ENCODE measurements at regions of chr14 and their contacts with region 1.

Region 1: GRCh38 chr14:45526715-45527549 is 273.9 kb upstream of the MIS18BP1 start:
- DNase-seq: no peak
- H3K4me3 ChIP-seq: no peak overlapping the region
- H3K27ac ChIP-seq: no peak overlapping the region
- H3K27me3 ChIP-seq: no peaks in the 10 kb centered on the region
- CTCF ChIP-seq: peak in 34 of 56 donors; percentile 10 to 46 (median 28)

Region 2: GRCh38 chr14:45426670-45427282 is 100.2 kb before region 1 on chr14:
- intact Hi-C with region 1: loop called in 1 of 2 experiments (anchors 5 kb)
- DNase-seq: no peak
- H3K4me3 ChIP-seq: no peak overlapping the region
- H3K27ac ChIP-seq: no peak overlapping the region
- H3K27me3 ChIP-seq: no peaks in the 10 kb centered on the region
- CTCF ChIP-seq: peak; percentile 29 to 82 (median 68)

Region 3: GRCh38 chr14:45940307-45940706 is 413.4 kb after region 1 on chr14:
- intact Hi-C with region 1: no loop called
- DNase-seq: no peak
- H3K4me3 ChIP-seq: no peak overlapping the region
- H3K27ac ChIP-seq: no peak overlapping the region
- H3K27me3 ChIP-seq: no peaks in the 10 kb centered on the region
- CTCF ChIP-seq: no peak